CD4-positive, alpha-beta memory T cell (primary cell): ENCODE measurements at regions of chr4 and their contacts with region 1.

Region 1: GRCh38 chr4:158722917-158723793 is at the start of gene PPID:
- DNase-seq: peak; percentile 77 to 88 (median 79)
- H3K4me3 ChIP-seq: peak within 1 kb of the TSS; percentile 63 to 89
- H3K4me3 Mint-ChIP-seq: peak within 1 kb of the TSS; percentile 95 to 100 (median 98)
- H3K27ac ChIP-seq: peak within 1 kb of the TSS; percentile 93
- H3K27ac Mint-ChIP-seq: peak within 1 kb of the TSS; percentile 95 to 100 (median 99)
- H3K4me1 ChIP-seq: peaks cover 24% of the 10 kb centered on the region
- H3K4me1 Mint-ChIP-seq: peaks cover 25 to 45% (median 35%) of the 10 kb centered on the region in 4 donors
- H3K27me3 ChIP-seq: no peaks in the 10 kb centered on the region
- H3K27me3 Mint-ChIP-seq: peaks cover 0 to 4% of the 10 kb centered on the region in 2 donors
- total RNA-seq, gene PPID: 30.2 to 32.0 TPM

Region 2: DNA sequence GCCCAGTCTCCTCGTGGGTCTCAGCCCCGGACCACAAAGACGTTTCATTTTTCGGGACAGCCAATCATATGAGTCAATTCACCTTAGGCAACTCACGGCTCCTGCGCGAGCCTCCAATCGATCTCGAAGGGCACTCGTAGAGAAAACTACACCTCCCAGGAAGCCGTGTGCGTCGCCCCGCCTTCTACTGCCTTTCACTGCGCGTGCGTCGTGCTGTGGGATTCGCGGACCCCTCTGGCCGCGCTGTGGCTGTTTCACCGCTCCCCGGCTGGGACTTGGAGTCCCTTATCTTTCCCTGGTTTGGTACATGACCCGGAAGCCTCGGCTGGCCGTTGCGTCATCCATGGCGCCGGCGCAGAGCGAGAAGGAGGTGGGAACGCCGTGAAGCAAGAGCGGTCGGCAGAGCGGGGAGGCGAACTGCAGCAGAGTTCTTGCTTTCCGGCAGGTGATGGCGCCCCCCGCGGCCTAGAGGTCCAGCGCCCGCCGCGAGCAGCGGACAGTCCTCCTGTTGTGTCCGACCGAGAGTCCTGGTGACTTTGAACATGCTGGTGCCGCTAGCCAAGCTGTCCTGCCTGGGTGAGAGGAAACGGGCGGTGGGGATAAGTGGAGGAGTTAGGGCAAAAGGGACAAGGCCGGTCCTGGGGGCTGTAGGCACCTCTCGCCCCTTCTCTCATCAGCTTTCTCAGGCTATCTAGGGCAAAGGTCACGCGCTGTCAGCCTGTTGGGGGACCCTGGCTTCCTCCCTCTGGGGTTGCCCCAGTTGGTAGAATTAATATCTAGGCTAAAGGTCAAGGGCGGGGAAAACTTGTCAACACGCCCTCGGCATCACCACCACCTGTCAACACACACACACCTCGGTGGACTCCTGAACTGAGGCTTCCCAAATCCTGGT is 51.0 kb before region 1 on chr4 and contains the start of gene ETFDH:
- CTCF ChIA-PET with region 1: no interaction called
- POLR2A ChIA-PET with region 1: no interaction called
- intact Hi-C with region 1: loop called (anchors 1 kb)
- DNase-seq: peak; percentile 97 to 99 (median 99)
- H3K4me3 ChIP-seq: peak within 1 kb of the TSS; percentile 53 to 94
- H3K4me3 Mint-ChIP-seq: peak within 1 kb of the TSS; percentile 92 to 98 (median 96)
- H3K27ac ChIP-seq: peak within 1 kb of the TSS; percentile 92
- H3K27ac Mint-ChIP-seq: peak within 1 kb of the TSS; percentile 92 to 99 (median 98)
- H3K4me1 ChIP-seq: peaks cover 22% of the 10 kb centered on the region
- H3K4me1 Mint-ChIP-seq: peaks cover 12 to 34% (median 23%) of the 10 kb centered on the region in 4 donors
- H3K27me3 ChIP-seq: no peaks in the 10 kb centered on the region
- H3K27me3 Mint-ChIP-seq: no peaks in the 10 kb centered on the region
- total RNA-seq, gene ETFDH: 16.0 to 16.6 TPM

Region 3: GRCh38 chr4:158884280-158884679 is 161.1 kb after region 1 on chr4:
- CTCF ChIA-PET with region 1: no interaction called
- POLR2A ChIA-PET with region 1: no interaction called
- intact Hi-C with region 1: no loop called
- DNase-seq: no peak
- H3K4me3 ChIP-seq: no peak overlapping the region
- H3K4me3 Mint-ChIP-seq: no peak overlapping the region
- H3K27ac ChIP-seq: no peak overlapping the region
- H3K27ac Mint-ChIP-seq: peak overlapping the region in 1 of 7 donors; percentile 72
- H3K4me1 ChIP-seq: no peaks in the 10 kb centered on the region
- H3K4me1 Mint-ChIP-seq: peaks cover 0 to 4% (median 0%) of the 10 kb centered on the region in 4 donors
- H3K27me3 ChIP-seq: no peaks in the 10 kb centered on the region
- H3K27me3 Mint-ChIP-seq: no peaks in the 10 kb centered on the region